Psoas muscle (tissue), 8 donors: ENCODE measurements at regions of chr2 and their contacts with region 1.

Region 1: DNA sequence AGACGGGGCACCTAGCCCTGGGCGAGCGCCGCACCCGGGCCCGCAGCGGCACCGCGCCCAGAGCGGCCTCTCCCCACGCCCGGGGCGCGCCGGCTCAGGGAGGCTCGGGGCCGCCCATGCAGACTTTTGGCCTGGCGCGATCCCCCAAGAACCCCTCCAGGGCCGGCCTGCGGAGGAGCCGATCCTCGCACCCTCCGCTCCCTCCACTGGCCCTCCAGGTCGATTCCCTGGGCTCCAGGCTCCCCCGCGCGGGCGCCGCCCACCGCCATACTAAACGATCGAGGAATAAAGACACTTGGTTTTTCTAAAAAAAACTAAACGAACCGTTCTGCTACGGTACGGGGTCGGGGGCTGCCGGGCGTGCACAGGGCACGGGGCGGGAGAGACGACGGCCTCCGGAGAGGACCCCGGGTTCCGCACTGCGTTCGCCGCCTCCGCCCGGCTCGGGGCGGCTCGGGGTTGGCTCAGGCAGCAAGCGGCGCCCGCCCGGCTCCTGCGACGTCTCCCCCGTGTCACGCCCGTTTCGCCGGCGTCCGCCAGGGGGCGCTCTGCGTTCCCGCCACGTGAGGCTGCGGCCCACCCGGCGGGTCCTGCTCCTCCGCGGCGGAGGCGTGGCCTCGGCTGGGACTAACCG is 365 bp upstream of the KHK start:
- DNase-seq: peak; percentile 96 to 98
- ATAC-seq: peak; percentile 87 to 92 (median 89)
- H3K4me3 ChIP-seq: peak overlapping the region; percentile 70
- H3K27ac ChIP-seq: peak overlapping the region; percentile 84
- H3K4me1 ChIP-seq: peaks cover 24% of the 10 kb centered on the region
- H3K27me3 ChIP-seq: no peaks in the 10 kb centered on the region
- CTCF ChIP-seq: peak; percentile 94

Region 2: DNA sequence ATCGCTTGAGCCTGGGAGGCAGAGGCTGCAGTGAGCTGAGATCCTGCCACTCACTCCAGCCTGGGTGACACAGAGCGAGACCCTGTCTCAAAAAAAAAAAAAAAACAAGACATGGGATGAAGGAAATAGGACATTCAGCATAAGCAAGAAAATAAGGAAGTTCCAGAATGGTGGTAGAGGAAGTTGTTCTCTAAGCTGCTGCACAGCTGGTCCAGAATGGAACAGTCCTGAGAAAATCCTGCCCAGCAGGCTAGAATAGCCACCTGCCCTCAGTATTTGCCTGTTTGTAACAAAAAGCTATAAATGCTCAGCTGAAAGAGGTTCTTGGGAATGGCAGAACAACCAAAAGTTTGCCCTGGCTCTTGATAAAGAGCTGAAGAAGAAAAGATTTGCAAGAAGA is 126.9 kb before region 1 on chr2:
- intact Hi-C with region 1: loop called (anchors 2 to 5 kb)
- DNase-seq: no peak
- ATAC-seq: no peak
- H3K4me3 ChIP-seq: no peak overlapping the region
- H3K27ac ChIP-seq: no peak overlapping the region
- H3K4me1 ChIP-seq: peaks cover 4% of the 10 kb centered on the region
- H3K27me3 ChIP-seq: peaks cover 0 to under 1% (median 0%) of the 10 kb centered on the region in 3 donors
- CTCF ChIP-seq: no peak

Region 3: DNA sequence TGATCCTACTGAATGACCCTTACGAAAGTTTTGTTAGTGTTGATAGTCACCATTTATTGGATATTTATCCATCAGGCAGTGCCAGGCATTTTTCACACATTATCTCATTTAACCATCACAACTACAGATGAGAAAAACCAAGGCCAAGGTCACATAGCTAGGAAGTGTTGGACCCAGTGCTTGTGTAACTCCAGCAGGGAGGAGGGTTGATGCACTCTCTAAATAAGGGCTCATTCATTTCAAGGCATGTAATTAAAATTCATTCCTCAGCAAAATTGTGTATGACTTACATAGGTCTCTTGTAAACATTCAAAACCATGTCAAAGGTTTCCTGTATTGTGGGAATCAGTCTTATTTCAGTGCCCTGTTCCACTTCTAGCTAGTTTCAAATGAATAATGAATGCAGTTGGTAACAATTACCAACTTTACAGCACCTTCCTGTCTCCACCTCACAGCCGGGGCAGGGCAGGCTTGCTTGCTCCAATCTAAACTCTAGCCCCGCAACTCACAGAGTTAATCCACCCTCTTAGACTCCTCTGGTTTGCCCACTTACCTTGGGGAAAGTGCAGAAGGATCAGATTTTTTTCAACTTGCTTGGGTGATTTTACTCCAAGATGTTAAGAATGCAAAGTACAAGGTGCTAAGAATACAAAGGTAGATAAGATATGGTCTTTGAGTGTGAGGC is 121.6 kb before region 1 on chr2:
- intact Hi-C with region 1: loop called (anchors 2 to 5 kb)
- DNase-seq: no peak
- ATAC-seq: no peak
- H3K4me3 ChIP-seq: no peak overlapping the region
- H3K27ac ChIP-seq: no peak overlapping the region
- H3K4me1 ChIP-seq: peaks cover 5% of the 10 kb centered on the region
- H3K27me3 ChIP-seq: no peaks in the 10 kb centered on the region
- CTCF ChIP-seq: no peak

Region 4: DNA sequence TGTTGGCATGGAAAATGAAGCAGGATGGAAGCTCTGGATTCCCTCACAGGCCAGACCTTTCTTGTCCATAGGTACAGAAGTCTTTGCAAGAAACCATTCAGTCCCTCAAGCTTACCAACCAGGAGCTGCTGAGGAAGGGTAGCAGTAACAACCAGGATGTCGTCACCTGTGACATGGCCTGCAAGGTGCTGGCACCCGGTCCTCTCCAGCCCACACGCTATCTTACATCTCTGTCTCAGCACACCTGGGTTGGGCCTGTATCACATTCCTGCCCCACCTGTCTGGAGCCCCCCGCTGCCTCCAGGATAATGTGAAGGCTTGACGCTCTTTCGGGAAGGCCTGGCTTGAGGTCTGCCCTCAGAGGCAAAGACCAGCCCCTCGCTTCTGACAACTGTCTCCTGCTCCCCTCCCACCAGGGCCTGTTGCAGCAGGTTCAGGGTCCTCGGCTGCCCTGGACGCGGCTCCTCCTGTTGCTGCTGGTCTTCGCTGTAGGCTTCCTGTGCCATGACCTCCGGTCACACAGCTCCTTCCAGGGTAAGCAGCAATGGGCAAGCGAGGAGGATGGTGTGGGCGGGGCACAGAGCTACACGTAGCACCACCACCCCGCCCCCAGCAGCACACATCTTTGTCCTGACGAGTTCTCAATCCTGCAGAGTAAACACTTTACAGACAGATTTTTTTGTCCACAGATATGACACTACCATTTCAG is 47.4 kb before region 1 on chr2:
- intact Hi-C with region 1: loop called in 1 of 2 experiments (anchors 5 kb)
- DNase-seq: no peak
- ATAC-seq: no peak
- H3K4me3 ChIP-seq: no peak overlapping the region
- H3K27ac ChIP-seq: no peak overlapping the region
- H3K4me1 ChIP-seq: peaks cover 21% of the 10 kb centered on the region
- H3K27me3 ChIP-seq: no peaks in the 10 kb centered on the region
- CTCF ChIP-seq: no peak

Region 5: DNA sequence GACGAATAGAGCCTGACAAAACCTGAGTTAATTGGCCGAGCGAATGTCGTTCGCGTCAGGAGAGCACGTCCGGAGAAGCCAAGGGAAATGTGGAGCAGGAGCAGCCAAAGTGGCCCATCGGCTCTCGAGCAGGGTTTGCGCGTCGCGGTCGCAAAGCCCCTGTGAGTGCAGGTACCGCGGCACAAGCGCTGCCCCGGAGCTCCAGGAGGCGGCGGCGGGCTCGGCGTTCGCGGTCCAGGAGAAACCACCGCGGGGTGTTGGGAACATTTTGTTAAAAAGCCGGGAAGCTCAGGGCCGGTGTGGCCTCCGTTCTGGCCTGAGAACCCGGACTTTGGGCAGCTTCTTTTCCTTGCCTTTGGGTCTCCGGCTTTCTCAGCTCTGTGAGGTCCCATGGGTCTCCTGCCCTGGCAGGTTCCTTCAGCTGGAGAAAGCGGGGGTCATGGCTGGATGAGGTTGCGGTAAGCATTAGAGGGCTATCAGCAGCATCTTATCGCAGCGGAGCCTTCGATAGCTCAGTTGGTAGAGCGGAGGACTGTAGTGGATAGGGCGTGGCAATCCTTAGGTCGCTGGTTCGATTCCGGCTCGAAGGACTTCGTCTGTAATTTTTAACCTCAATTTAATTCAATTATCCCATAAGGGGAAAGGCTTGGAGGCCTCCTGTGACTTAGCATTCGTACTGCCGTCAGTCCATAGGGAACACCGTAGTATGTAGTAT is 35.8 kb before region 1 on chr2:
- intact Hi-C with region 1: loop called in 1 of 2 experiments (anchors 1 kb)
- DNase-seq: peak; percentile 84 to 93
- ATAC-seq: peak; percentile 84 to 88 (median 86)
- H3K4me3 ChIP-seq: peak overlapping the region; percentile 92
- H3K27ac ChIP-seq: peak overlapping the region; percentile 77
- H3K4me1 ChIP-seq: peaks cover 15% of the 10 kb centered on the region
- H3K27me3 ChIP-seq: no peaks in the 10 kb centered on the region
- CTCF ChIP-seq: peak; percentile 48

Region 6: DNA sequence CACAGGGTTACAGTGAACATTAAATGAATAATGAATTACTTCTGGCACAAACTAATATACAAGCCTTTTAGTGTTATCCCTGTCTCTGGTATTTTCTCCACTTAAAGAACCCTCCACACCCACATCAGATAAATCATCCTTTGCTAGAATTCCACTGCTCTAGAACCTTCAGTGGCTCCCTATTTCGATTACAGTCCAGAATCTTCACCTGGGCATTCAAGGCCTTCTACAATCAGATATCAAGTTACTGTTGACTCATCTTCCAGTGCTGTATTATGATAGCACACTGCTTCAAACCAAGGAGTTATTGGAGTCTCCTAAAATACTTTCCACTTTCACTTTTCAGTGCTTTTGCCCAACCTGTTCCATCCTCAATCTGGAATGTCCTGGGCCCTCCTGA is 29.3 kb after region 1 on chr2:
- intact Hi-C with region 1: no loop called
- DNase-seq: no peak
- ATAC-seq: no peak
- H3K4me3 ChIP-seq: no peak overlapping the region
- H3K27ac ChIP-seq: no peak overlapping the region
- H3K4me1 ChIP-seq: no peaks in the 10 kb centered on the region
- H3K27me3 ChIP-seq: peaks cover 0 to 9% (median 0%) of the 10 kb centered on the region in 3 donors
- CTCF ChIP-seq: no peak

Region 7: DNA sequence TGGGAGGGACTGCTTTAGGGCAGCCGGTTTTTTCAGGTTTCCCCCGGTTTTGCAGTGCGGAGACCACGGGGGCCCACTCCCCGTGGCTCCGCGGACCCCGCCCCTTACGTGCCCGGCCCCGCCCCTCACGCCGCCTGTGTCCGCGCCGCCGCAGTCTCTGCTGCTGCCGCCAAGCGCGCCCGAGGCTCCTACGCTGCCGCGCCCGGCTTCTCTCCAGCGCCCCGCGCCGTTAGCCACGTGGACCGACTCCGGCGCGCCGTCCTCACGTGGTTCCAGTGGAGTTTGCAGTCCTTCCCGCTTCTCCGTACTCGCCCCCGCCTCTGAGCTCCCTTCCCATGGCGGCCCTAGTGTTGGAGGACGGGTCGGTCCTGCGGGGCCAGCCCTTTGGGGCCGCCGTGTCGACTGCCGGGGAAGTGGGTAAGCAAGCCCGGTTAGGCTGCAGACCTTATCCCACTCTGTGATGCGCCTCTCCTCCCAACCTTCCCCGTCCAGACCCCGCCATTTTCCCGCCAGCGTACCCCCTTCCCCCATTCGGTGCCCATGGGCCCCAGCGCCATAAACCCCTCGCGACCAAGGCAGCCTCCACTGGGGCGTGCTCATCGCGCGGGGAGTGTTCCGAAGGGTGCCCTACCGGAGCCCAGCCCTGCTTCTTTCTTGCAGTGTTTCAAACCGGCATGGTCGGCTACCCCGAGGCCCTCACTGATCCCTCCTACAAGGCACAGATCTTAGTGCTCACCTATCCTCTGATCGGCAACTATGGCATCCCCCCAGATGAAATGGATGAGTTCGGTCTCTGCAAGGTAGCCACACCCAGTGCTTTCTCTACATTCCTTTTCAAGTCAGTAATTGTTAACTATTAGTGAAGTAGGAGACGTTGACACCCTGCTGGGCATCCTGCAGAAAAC is 131.3 kb after region 1 on chr2 and contains the start of gene CAD:
- intact Hi-C with region 1: no loop called
- DNase-seq: peak; percentile 88 to 90
- ATAC-seq: peak; percentile 82 to 91 (median 88)
- H3K4me3 ChIP-seq: peak within 1 kb of the TSS; percentile 80
- H3K27ac ChIP-seq: peak within 1 kb of the TSS; percentile 77
- H3K4me1 ChIP-seq: peaks cover 22% of the 10 kb centered on the region
- H3K27me3 ChIP-seq: no peaks in the 10 kb centered on the region
- CTCF ChIP-seq: peak; percentile 11
- total RNA-seq, gene CAD: 7.8 to 8.6 (median 8.2) TPM